Heart right ventricle (tissue), 16 donors: ENCODE measurements at regions of chr6 and their contacts with region 1.

Region 1: DNA sequence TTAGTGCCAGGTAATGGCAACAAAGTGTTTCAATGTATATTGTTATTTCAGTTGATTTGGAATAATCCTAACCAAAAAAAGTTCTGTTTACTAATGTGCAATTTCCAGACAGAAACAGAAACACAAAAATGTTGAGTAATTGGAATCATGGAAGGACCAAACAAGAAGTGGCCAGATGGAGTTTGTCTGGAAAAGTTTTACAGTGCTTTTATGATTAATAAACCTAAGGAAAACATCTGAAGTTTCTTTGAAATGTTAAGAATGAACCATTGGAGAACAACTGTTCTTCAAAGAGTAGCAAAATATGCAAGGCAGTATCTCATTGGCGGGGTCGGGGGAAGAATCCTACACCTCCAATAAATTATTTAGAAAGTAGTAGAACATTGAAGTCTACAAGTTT is 19.0 kb upstream of the FILIP1 start:
- DNase-seq: no peak
- ATAC-seq: no peak
- H3K4me3 ChIP-seq: no peak overlapping the region
- H3K27ac ChIP-seq: no peak overlapping the region
- H3K4me1 ChIP-seq: no peaks in the 10 kb centered on the region
- H3K27me3 ChIP-seq: no peaks in the 10 kb centered on the region
- CTCF ChIP-seq: no peak

Region 2: DNA sequence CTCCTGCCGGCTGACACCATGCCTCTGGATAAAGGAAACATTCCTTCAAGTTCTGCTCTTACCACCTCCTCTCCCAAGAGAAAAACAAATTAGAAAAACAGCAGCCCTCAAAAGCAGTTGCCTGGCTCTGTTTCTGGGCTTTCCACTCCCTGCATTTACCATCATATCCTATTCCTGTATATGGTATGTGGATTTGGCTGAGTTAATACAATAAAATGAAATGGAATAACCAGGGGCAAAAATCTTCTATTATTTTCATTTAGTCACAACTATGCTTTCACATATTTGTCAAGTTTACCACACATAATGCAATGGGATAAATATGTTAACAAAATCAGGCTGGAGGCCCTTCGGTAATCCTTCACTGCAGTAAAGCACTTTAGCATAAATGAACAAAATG is 341.0 kb before region 1 on chr6:
- intact Hi-C with region 1: no loop called
- DNase-seq: no peak
- ATAC-seq: peak in 1 of 8 donors; percentile 45
- H3K4me3 ChIP-seq: no peak overlapping the region
- H3K27ac ChIP-seq: peak overlapping the region in 2 of 10 donors; percentile 17 to 22
- H3K4me1 ChIP-seq: peaks cover 0 to 29% (median 13%) of the 10 kb centered on the region in 9 donors
- H3K27me3 ChIP-seq: no peaks in the 10 kb centered on the region
- CTCF ChIP-seq: no peak

Region 3: DNA sequence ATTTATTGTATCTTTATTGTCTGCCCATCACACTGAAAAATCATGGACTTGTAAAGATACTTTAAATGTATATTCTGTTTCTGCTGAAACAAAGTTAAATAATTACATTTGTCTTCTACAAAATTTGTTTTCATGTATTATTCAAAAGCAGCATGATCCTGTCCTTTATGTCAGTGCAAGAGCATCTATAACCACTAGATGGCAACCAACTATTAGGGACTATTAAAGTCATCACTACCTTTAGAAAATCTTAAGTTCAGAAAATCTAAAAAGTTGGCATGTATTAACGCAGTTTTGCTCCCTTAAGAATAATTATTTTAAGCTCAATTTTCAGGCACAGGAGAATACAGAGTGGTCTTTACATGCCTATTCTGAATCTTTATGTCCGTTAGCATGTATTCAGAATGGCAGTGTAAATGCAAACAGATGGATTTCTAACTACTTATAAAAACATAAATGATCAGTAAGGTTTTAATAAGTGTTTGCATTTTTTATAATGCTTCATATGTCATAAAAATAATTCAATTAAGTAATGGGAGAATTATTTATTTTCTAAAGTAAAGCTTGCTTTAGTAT is 245.8 kb before region 1 on chr6:
- intact Hi-C with region 1: loop called in 2 of 10 experiments (anchors 5 kb)
- DNase-seq: no peak
- ATAC-seq: peak in 7 of 8 donors; percentile 66 to 80 (median 70)
- H3K4me3 ChIP-seq: no peak overlapping the region
- H3K27ac ChIP-seq: no peak overlapping the region
- H3K4me1 ChIP-seq: peaks cover 3 to 39% (median 25%) of the 10 kb centered on the region in 9 donors
- H3K27me3 ChIP-seq: no peaks in the 10 kb centered on the region
- CTCF ChIP-seq: peak; percentile 73 to 92 (median 84)

Region 4: DNA sequence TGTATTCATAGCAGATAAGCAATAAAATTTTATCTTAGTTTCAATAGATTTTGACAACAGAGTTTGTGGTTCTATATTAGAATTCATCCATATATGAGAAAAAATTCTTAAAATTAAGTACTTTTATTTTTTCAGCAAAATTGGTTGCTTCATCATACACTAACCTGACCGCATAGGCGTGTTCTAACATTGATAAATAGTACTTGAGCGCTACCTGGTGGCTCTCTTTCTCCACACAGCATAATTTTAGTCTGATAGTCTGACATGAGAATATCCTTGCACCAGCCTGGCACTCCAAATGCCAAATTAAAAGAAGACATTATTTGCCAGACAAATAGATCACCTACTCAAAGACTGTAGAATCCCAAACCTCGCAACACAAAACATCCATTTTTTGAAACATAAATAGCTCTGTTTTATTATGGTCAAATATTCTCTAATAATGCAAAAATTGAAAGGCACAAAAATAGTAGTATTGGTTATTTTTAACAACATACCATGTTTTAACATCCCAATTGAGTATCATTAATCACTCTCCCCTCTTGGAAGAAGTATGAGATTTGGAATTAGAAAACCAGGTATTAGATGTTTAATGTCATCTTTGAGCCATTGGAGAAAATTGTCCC is 14.0 kb after region 1 on chr6:
- intact Hi-C with region 1: no loop called
- DNase-seq: peak in 1 of 2 donors; percentile 75
- ATAC-seq: peak; percentile 68 to 92 (median 88)
- H3K4me3 ChIP-seq: no peak overlapping the region
- H3K27ac ChIP-seq: no peak overlapping the region
- H3K4me1 ChIP-seq: peaks cover 0 to 9% (median 0%) of the 10 kb centered on the region in 9 donors
- H3K27me3 ChIP-seq: no peaks in the 10 kb centered on the region
- CTCF ChIP-seq: peak; percentile 39 to 86 (median 79)

Region 5: DNA sequence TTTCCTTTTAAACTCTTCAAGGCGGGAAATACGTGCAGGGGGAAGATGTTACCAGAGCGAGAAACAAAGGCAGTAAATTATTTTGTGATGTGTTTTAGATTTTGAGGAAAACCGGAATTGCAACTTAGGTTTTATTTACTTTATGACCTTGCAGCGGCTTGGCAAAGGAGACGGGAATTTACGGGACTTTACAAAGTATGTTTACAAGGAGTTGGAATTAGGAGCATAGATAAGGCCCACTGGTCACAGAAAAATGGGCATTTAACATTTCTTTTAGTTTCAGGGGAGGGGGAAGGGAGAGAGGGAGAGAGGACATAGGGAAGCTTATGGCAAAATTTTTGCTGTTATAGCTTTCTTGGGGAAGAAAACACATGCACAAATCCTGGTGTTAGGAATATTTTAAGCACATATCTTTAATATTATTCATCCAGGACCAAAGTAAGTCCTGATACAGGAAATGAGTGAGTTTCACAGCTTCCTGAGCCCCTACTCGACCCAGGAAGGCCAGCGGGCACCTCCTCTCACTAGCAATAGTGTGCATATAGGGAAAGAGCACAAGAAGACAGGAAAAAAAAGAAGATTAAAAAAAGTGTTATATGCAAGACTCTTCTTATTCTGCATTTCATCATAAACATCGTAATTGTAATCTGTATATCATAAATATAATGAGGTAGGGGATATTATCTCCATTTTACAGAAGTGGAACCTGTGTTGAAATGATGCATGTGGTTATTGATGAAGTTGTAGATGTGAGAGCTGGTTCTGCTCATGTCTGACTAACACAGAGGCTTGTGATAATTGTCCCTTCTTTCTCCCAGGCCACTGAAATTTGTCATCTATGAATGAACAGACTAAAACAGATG is 337.3 kb after region 1 on chr6:
- intact Hi-C with region 1: no loop called
- DNase-seq: no peak
- ATAC-seq: no peak
- H3K4me3 ChIP-seq: no peak overlapping the region
- H3K27ac ChIP-seq: no peak overlapping the region
- H3K4me1 ChIP-seq: no peaks in the 10 kb centered on the region
- H3K27me3 ChIP-seq: no peaks in the 10 kb centered on the region
- CTCF ChIP-seq: no peak